ENCODE measurements at regions of chr12 and their contacts with region 1.

Region 1: GRCh38 chr12:98769068-98769467 is 124.0 kb downstream of the APAF1 start:
- DNase-seq: no peak
- H3K4me3 ChIP-seq: no peak overlapping the region
- H3K27ac ChIP-seq: no peak overlapping the region
- H3K4me1 ChIP-seq: no peaks in the 10 kb centered on the region
- H3K27me3 ChIP-seq: no peaks in the 10 kb centered on the region
- CTCF ChIP-seq: no peak

Region 2: DNA sequence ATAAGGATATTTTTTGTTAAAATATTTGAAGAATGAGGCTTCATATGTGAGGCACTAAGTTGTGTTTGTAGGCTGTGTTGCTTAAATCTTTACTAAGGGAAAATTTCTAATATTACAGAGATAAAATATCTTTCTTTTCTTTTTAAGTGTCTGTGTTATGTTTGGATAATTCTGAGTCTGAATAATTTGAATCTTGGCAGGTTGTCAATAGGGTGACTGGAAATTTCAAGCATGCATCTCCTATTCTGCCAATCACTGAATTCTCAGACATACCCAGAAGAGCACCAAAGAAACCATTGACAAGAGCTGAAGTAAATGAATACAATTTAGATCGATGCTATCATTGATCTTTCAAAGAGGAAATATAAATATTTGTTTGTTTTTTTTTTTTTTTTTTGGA is 224.3 kb before region 1 on chr12:
- CTCF ChIA-PET with region 1: no interaction called
- POLR2A ChIA-PET with region 1: no interaction called
- intact Hi-C with region 1: no loop called
- DNase-seq: peak; percentile 7
- H3K4me3 ChIP-seq: no peak overlapping the region
- H3K27ac ChIP-seq: no peak overlapping the region
- H3K4me1 ChIP-seq: peaks cover 8% of the 10 kb centered on the region
- H3K27me3 ChIP-seq: no peaks in the 10 kb centered on the region
- CTCF ChIP-seq: no peak

Region 3: GRCh38 chr12:98618952-98619351 is 150.1 kb before region 1 on chr12:
- CTCF ChIA-PET with region 1: no interaction called
- POLR2A ChIA-PET with region 1: interaction called, 10 read pairs
- intact Hi-C with region 1: no loop called
- DNase-seq: peak; percentile 68
- H3K4me3 ChIP-seq: no peak overlapping the region
- H3K27ac ChIP-seq: no peak overlapping the region
- H3K4me1 ChIP-seq: peaks cover 4% of the 10 kb centered on the region
- H3K27me3 ChIP-seq: no peaks in the 10 kb centered on the region
- CTCF ChIP-seq: no peak

Region 4: GRCh38 chr12:98856897-98857540 is 88.0 kb after region 1 on chr12:
- CTCF ChIA-PET with region 1: no interaction called
- POLR2A ChIA-PET with region 1: no interaction called
- intact Hi-C with region 1: no loop called
- DNase-seq: peak; percentile 20
- H3K4me3 ChIP-seq: no peak overlapping the region
- H3K27ac ChIP-seq: no peak overlapping the region
- H3K4me1 ChIP-seq: no peaks in the 10 kb centered on the region
- H3K27me3 ChIP-seq: no peaks in the 10 kb centered on the region
- CTCF ChIP-seq: no peak

Region 5: GRCh38 chr12:98883231-98883630 is 114.2 kb after region 1 on chr12:
- CTCF ChIA-PET with region 1: no interaction called
- POLR2A ChIA-PET with region 1: interaction called, 14 read pairs
- intact Hi-C with region 1: no loop called
- DNase-seq: no peak
- H3K4me3 ChIP-seq: no peak overlapping the region
- H3K27ac ChIP-seq: no peak overlapping the region
- H3K4me1 ChIP-seq: no peaks in the 10 kb centered on the region
- H3K27me3 ChIP-seq: peaks cover 53% of the 10 kb centered on the region
- CTCF ChIP-seq: no peak

Region 6: DNA sequence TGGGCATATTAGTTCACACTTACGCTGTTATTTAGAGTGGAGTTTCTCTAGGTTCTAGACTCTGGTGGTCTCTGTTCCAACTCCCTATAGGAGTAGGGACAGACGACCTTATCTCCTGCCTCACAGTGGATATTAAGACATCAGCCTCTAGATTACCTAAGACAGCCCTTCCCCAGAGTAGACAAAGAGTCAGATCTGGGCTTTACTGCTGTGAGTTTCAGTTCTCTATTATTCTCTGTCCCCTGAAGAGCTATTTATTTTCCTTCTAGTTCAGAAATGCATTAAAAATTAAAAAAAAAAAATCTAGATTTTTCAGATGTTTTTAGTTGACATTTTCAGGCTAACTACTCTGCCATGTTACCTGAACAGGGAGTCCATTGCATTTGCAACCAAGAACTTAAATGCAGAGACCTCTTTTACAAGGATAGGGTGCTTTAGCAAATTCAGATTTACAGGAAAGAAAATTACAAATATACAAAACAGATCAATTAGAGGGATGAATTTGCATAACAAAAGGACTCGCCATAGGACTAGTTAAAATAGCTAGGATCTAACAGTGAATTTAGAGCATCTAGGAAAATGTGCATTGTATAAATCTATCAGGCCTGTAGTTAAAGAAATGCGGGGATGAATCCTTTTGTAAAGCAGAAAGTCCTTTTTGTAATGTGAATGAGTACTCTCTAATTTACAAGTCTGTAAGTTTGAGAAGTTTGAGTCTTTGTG is 257.4 kb after region 1 on chr12:
- CTCF ChIA-PET with region 1: no interaction called
- POLR2A ChIA-PET with region 1: no interaction called
- intact Hi-C with region 1: no loop called
- DNase-seq: no peak
- H3K4me3 ChIP-seq: no peak overlapping the region
- H3K27ac ChIP-seq: no peak overlapping the region
- H3K4me1 ChIP-seq: peaks cover 4% of the 10 kb centered on the region
- H3K27me3 ChIP-seq: no peaks in the 10 kb centered on the region
- CTCF ChIP-seq: no peak